ENCODE measurements at regions of chr17 and their contacts with region 1.

Region 1: DNA sequence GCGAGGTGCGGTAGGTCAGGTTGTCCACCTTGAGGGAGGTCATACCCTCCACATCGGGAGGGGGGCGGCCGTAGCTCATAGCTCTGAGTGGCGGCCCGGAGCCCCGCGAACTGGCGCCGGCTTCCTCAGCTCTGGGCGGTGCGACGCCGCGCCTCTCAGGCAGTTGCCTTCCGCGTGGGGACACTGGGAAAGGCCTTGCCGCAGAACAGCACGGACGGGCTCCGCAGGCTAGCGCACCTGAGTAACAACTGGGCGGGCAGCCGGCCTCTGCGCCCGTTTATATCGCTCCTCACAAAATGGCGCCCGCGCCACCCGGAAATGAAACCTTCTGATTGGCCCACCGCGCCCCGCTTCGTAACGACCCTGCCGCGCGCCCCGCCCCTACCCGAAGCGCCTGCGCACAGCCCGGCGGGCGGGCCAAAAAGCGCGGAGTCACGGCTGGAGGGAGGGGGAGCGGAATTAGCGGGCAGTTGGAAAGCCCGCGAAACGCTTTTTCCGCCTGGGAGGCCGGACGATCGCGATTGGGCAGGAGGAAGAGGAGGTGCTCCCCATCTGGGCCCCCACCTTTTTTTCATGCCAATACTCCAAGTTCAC is at the start of gene SRSF2:
- DNase-seq: peak; percentile 99
- H3K4me3 ChIP-seq: peak within 1 kb of the TSS; percentile 97
- H3K4me3 Mint-ChIP-seq: peak within 1 kb of the TSS; percentile 96
- H3K27ac Mint-ChIP-seq: peak within 1 kb of the TSS; percentile 96
- H3K4me1 ChIP-seq: peaks cover 18% of the 10 kb centered on the region
- H3K4me1 Mint-ChIP-seq: peaks cover 21% of the 10 kb centered on the region
- H3K27me3 ChIP-seq: no peaks in the 10 kb centered on the region
- H3K27me3 Mint-ChIP-seq: no peaks in the 10 kb centered on the region
- CTCF ChIP-seq: no peak
- total RNA-seq, gene SRSF2: 349 and 356 TPM in 2 replicates

Region 2: DNA sequence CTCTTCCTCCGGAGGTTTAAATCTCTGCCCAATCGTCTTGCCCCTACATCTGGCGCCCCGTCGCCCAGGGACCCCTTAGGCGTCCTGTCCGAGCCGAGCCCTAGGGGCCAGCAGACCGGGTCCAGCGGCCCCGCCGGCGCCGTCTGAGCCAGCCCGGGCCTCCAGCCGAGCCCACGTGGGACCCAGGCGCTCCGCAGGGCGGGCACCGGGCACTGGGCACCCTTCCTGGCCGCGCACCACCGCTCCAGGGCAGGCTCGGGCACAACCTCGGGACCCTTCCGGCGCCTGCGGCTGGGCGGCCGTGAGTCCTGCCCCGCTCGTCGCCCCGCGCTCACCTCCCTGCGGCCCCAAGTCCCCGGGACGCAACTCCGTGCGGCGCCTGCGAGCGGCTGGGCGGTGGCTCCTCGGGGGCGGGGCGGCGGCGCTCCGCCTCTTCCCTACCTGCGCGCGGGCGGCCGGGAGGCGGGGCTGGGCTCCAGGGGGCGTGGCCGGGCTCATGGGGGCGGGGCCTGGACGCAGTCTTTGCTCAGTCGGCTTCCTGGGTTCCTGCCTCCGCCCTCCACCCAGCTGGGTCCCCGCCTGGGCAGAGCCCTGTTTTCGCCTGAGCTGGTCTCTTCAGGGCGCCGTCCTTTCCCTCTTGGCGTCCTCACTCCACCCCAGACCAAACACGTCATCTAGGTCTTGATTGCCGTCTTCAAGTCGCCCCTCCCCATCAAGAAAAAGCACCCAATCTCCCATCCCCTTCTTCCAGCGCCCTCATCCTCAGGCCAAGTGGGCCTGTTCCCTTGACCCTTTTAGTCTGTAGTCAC is 236.0 kb before region 1 on chr17 and contains the start of gene RHBDF2:
- CTCF ChIA-PET with region 1: no interaction called
- POLR2A ChIA-PET with region 1: interaction called, 11 read pairs
- intact Hi-C with region 1: no loop called
- DNase-seq: peak; percentile 92 to 97
- H3K4me3 ChIP-seq: peak within 1 kb of the TSS; percentile 64
- H3K4me3 Mint-ChIP-seq: peak within 1 kb of the TSS; percentile 87
- H3K27ac Mint-ChIP-seq: peak within 1 kb of the TSS; percentile 91
- H3K4me1 ChIP-seq: peaks cover 35% of the 10 kb centered on the region
- H3K4me1 Mint-ChIP-seq: peaks cover 21% of the 10 kb centered on the region
- H3K27me3 ChIP-seq: no peaks in the 10 kb centered on the region
- H3K27me3 Mint-ChIP-seq: no peaks in the 10 kb centered on the region
- CTCF ChIP-seq: no peak
- total RNA-seq, gene RHBDF2: 33.8 and 37.2 TPM in 2 replicates

Region 3: GRCh38 chr17:76704805-76705204 is 32.4 kb before region 1 on chr17:
- CTCF ChIA-PET with region 1: no interaction called
- POLR2A ChIA-PET with region 1: no interaction called
- intact Hi-C with region 1: no loop called
- DNase-seq: no peak
- H3K4me3 ChIP-seq: no peak overlapping the region
- H3K4me3 Mint-ChIP-seq: no peak overlapping the region
- H3K27ac Mint-ChIP-seq: no peak overlapping the region
- H3K4me1 ChIP-seq: peaks cover 22% of the 10 kb centered on the region
- H3K4me1 Mint-ChIP-seq: peaks cover 28% of the 10 kb centered on the region
- H3K27me3 ChIP-seq: no peaks in the 10 kb centered on the region
- H3K27me3 Mint-ChIP-seq: no peaks in the 10 kb centered on the region
- CTCF ChIP-seq: no peak

Region 4: DNA sequence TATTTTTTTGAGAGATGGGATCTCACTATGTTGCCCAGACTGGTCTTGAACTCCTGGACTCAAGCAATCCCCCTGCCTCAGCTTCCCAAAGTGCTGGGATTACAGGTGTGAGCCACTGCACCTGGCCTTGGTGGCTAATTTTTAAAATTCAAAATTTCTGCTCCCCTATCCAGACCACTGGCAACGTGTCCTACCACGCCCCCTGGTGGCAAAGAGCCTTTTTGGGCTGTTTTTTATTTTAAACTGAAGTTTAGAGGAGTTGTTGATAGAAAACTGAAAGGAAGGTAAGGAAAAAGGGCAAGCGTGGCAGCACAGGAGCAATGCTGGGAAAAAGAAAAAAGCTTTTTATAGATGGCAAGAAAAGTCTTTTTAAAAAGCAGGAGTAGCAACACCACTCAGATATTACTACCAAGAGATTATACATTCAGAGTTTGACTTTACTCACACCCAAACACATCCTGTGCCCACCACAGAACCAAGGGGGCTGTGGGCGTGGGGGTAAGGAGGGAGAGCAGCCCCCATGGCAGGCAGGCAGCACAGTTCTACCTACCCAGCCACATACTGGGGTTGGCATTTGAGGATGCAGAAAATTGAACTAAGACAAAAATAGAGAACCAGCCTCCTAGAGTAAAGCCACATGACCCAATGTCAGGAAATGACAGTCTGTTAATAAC is 22.2 kb before region 1 on chr17:
- CTCF ChIA-PET with region 1: no interaction called
- POLR2A ChIA-PET with region 1: no interaction called
- intact Hi-C with region 1: loop called (anchors 1 kb)
- DNase-seq: peak; percentile 66 to 84
- H3K4me3 ChIP-seq: no peak overlapping the region
- H3K4me3 Mint-ChIP-seq: no peak overlapping the region
- H3K27ac Mint-ChIP-seq: no peak overlapping the region
- H3K4me1 ChIP-seq: peaks cover 5% of the 10 kb centered on the region; the same call in 1 of the 2 replicates
- H3K4me1 Mint-ChIP-seq: peaks cover 13% of the 10 kb centered on the region
- H3K27me3 ChIP-seq: no peaks in the 10 kb centered on the region
- H3K27me3 Mint-ChIP-seq: no peaks in the 10 kb centered on the region
- CTCF ChIP-seq: peak; percentile 82 to 89

Region 5: GRCh38 chr17:76781056-76781982 is 44.1 kb after region 1 on chr17:
- CTCF ChIA-PET with region 1: interaction called, 3 read pairs
- POLR2A ChIA-PET with region 1: no interaction called
- intact Hi-C with region 1: loop called (anchors 2 kb)
- DNase-seq: peak in 1 of 2 experiments; percentile 30
- H3K4me3 ChIP-seq: no peak overlapping the region
- H3K4me3 Mint-ChIP-seq: no peak overlapping the region
- H3K27ac Mint-ChIP-seq: no peak overlapping the region
- H3K4me1 ChIP-seq: no peaks in the 10 kb centered on the region
- H3K4me1 Mint-ChIP-seq: no peaks in the 10 kb centered on the region
- H3K27me3 ChIP-seq: no peaks in the 10 kb centered on the region
- H3K27me3 Mint-ChIP-seq: no peaks in the 10 kb centered on the region
- CTCF ChIP-seq: no peak

Region 6: GRCh38 chr17:76805319-76805718 is 68.1 kb after region 1 on chr17:
- CTCF ChIA-PET with region 1: no interaction called
- POLR2A ChIA-PET with region 1: interaction called, 17 read pairs
- intact Hi-C with region 1: no loop called
- DNase-seq: no peak
- H3K4me3 ChIP-seq: no peak overlapping the region
- H3K4me3 Mint-ChIP-seq: no peak overlapping the region
- H3K27ac Mint-ChIP-seq: no peak overlapping the region
- H3K4me1 ChIP-seq: no peaks in the 10 kb centered on the region
- H3K4me1 Mint-ChIP-seq: no peaks in the 10 kb centered on the region
- H3K27me3 ChIP-seq: no peaks in the 10 kb centered on the region
- H3K27me3 Mint-ChIP-seq: no peaks in the 10 kb centered on the region
- CTCF ChIP-seq: no peak